HEK293 (cell line): ENCODE measurements at regions of chr18 and their contacts with region 1.

Region 1: GRCh38 chr18:42028247-42028832 is 73.3 kb downstream of the PIK3C3 start:
- H3K4me3 ChIP-seq: no peak overlapping the region
- H3K27ac ChIP-seq: no peak overlapping the region
- H3K4me1 ChIP-seq: no peaks in the 10 kb centered on the region
- CTCF ChIP-seq: no peak

Region 2: DNA sequence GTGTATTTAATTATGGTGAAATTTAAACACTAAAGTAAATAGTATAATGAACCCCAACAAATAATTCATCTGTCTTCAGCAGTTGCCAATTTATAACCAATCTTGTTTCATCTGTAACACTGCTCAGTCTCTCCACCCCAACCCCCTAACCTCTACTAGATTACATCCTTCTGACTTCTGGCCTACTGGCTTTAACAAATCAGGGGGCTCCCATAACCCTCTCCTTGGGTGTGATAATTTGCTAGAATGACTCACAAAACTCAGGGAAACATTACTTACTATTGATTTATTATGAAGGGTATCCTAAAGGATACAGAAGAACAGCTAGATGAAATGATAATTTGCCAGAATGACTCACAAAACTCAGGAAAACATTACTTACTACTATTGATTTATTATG is 22.6 kb before region 1 on chr18:
- CTCF ChIA-PET with region 1: interaction called, 11 read pairs
- POLR2A ChIA-PET with region 1: no interaction called
- H3K4me3 ChIP-seq: no peak overlapping the region
- H3K27ac ChIP-seq: no peak overlapping the region
- H3K4me1 ChIP-seq: no peaks in the 10 kb centered on the region; the same call in 1 of the 2 replicates
- CTCF ChIP-seq: no peak

Region 3: DNA sequence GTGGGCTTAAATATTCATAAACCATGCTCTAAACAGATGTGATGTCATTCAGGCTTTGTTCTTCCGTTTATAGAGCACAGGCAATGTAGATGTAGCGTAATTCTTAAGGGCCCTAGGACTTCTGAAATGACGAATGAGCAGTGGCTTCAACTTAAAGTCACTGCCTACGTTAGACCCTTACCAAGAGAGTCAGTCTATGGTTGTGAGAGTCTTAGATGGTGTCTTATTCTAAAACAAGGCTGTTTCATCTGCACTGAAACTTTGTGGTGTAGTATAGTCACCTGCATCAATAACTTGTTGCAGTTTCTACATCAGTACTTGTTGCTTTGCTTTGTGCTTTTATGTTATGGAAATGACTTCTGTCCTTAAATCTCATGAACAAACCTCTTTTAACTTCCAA is 17.3 kb before region 1 on chr18:
- CTCF ChIA-PET with region 1: interaction called, 31 read pairs
- POLR2A ChIA-PET with region 1: no interaction called
- H3K4me3 ChIP-seq: no peak overlapping the region
- H3K27ac ChIP-seq: no peak overlapping the region
- H3K4me1 ChIP-seq: no peaks in the 10 kb centered on the region
- CTCF ChIP-seq: no peak

Region 4: DNA sequence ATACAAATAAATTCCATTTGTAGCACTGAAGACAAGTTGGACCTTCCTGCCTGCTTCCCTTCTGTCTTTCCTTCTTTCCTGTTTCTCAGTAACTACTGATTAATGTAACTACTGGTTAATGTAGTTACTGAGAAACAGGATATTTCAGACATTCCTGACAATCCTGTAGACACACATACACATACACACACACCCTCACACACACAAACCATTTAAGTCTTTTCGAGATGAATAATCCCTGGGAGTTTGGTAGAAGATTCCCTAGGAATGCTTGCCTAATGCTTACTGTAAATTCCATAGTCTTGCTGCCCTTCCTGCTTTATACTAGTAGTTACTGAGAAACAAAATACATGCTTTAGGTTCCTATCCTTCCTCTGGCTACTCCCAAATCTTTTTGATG is 10.6 kb after region 1 on chr18:
- CTCF ChIA-PET with region 1: interaction called, 23 read pairs
- POLR2A ChIA-PET with region 1: no interaction called
- H3K4me3 ChIP-seq: no peak overlapping the region
- H3K27ac ChIP-seq: no peak overlapping the region
- H3K4me1 ChIP-seq: no peaks in the 10 kb centered on the region
- CTCF ChIP-seq: no peak

Region 5: DNA sequence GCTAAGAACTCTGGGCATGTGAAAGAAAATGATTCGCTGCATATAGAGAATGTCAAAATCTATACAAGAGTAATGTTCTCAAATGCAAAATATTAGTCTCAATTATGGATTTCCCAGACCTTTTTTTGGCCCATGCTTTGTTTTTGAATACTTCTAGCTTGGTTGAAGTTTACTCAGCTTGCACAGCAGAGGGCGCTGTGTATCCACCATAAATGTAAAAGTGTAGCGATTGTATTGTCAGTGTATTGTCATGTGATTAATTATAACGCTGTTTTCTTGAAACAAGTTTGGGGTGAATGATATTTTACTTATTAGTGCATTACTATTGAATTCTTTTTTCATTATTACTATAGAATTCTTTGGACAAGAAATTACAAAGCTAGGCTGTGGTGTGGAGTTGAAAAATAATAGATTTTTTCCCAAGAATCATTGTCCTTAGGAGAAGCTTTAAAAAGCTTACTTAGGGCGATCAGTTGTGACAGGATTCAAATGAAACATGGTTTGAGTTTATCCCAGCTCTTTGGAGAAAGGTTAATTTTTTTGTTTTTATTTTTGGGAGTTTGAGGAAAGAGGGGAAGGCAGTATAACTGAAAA is 24.9 kb after region 1 on chr18:
- CTCF ChIA-PET with region 1: interaction called, 12 read pairs
- POLR2A ChIA-PET with region 1: no interaction called
- H3K4me3 ChIP-seq: no peak overlapping the region
- H3K27ac ChIP-seq: no peak overlapping the region
- H3K4me1 ChIP-seq: no peaks in the 10 kb centered on the region
- CTCF ChIP-seq: peak; percentile 28; the same call in 1 of the 2 replicates